ENCODE measurements at regions of chr5 and their contacts with region 1.

Region 1: DNA sequence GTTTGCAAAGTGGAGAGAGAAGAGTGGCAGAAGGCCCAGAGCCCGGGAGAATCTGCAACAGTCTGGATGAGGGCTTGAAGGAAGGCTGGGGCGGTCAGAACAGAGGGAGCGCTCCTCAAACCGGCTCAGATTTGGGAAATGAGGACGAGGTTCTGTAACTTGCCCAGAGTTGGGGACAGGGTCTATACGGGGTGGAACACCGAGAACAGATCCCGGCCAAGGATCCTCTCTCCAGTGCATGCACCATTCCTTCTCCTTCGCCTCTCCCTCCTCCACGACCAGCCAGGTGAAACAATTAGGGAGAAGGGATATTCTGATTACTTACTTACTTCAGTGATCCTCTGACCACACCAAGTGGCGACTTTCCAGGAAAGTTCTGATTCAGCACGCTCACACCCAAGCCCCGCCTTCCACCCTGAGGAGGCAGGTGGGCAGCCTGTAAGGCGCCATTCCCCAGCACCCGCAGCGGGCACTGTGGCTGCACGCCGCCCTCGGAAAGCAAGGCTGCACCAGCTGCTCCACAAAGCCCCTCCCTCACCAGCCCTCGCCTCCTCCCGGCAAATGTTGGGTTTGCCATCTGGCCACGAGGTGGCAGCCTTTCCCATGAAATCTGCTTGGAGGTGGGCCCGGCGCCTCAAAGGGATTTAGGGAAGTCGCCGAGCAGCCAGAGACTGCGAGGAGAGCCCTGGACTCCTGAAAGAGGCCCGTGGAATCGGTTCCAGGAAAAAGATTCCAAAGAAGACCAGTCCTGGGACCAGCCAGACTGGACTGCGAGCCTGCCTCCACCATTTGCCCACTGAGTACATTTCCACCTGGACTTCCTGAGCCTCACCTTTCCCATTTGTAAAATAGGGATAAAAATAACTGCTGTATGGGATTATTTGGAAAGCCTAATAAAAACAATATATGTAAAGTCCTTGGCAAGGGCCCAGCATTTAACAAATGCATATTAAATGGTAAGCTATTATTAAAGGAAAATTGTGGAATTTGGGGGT is 22.2 kb upstream of the WWC1 start:
- DNase-seq: peak; percentile 88
- CTCF ChIP-seq: peak; percentile 93

Region 2: DNA sequence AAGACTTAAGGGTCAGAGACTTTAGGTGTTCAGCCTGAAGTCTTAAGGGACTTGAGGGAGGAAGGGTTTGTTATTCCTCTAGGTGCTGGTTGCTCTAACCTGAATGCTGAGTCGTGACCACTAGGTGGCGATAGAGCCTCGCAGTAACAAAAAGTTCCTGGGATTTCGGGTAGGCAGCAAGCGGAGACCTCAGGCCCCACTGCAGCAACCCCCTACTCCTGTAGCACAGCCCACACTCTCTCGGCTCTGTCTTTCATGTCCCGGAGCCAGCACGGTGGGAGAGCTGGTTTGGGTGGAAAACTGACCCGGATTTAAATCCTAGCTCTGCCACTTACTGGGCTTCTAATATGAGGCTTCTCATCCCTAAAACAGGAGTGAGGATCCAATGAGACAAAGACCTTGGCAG is 410.3 kb after region 1 on chr5:
- in situ Hi-C with region 1: loop called (anchors 25 kb)
- DNase-seq: peak; percentile 73
- CTCF ChIP-seq: peak; percentile 85